CD8-positive, alpha-beta memory T cell (primary cell): ENCODE measurements at regions of chr15 and their contacts with region 1.

Region 1: DNA sequence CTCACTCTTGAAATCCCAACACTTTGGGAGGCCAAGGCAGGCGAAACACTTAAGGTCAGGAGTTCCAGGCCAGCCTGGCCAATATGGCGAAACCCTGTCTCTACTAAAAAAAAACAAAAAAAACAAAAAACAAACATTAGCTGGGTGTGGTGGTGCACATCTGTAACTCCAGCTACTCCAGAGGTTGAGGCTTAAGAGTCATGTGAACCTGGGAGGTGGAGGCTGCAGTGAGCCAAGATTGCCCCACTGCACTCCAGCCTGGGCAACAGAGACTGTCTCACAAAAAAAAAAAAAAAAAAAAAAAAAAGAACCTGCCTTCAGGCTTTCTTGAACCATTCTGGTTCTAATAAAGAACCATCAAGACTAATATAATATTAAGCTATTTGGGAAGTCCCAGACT is 16.5 kb downstream of the ARPP19 start:
- DNase-seq: no peak
- H3K4me3 ChIP-seq: no peak overlapping the region
- H3K4me3 Mint-ChIP-seq: no peak overlapping the region
- H3K27ac ChIP-seq: no peak overlapping the region
- H3K27ac Mint-ChIP-seq: no peak overlapping the region
- H3K4me1 ChIP-seq: no peaks in the 10 kb centered on the region
- H3K4me1 Mint-ChIP-seq: peaks cover 20 to 35% (median 31%) of the 10 kb centered on the region in 3 donors
- H3K27me3 ChIP-seq: no peaks in the 10 kb centered on the region
- H3K27me3 Mint-ChIP-seq: no peaks in the 10 kb centered on the region

Region 2: DNA sequence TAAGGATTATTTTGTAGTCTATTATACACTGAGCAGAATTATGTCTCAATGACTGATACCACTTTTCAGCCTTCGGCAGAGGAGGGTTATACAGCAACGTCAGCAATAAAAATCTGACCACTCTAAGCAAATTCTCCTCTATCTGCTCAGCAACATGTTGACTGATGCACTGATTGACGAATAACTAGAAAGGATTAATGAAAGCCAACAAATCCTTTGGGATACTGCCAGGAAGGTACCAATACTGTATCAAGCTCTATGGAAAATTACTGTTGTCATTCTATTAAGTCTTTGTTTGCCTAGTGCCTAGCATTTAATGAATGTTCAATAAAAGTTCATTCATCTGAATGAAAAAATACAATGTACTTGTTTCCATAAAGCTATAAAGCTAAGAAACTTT is 11.3 kb after region 1 on chr15:
- CTCF ChIA-PET with region 1: interaction called, 12 read pairs
- POLR2A ChIA-PET with region 1: no interaction called
- DNase-seq: no peak
- H3K4me3 ChIP-seq: no peak overlapping the region
- H3K4me3 Mint-ChIP-seq: peak overlapping the region in 1 of 7 donors; percentile 19
- H3K27ac ChIP-seq: no peak overlapping the region
- H3K27ac Mint-ChIP-seq: no peak overlapping the region
- H3K4me1 ChIP-seq: peaks cover 52% of the 10 kb centered on the region
- H3K4me1 Mint-ChIP-seq: peaks cover 71 to 90% (median 87%) of the 10 kb centered on the region in 3 donors
- H3K27me3 ChIP-seq: no peaks in the 10 kb centered on the region
- H3K27me3 Mint-ChIP-seq: no peaks in the 10 kb centered on the region